Astrocyte of the cerebellum (primary cell): ENCODE measurements at regions of chr5 and their contacts with region 1.

Region 1: DNA sequence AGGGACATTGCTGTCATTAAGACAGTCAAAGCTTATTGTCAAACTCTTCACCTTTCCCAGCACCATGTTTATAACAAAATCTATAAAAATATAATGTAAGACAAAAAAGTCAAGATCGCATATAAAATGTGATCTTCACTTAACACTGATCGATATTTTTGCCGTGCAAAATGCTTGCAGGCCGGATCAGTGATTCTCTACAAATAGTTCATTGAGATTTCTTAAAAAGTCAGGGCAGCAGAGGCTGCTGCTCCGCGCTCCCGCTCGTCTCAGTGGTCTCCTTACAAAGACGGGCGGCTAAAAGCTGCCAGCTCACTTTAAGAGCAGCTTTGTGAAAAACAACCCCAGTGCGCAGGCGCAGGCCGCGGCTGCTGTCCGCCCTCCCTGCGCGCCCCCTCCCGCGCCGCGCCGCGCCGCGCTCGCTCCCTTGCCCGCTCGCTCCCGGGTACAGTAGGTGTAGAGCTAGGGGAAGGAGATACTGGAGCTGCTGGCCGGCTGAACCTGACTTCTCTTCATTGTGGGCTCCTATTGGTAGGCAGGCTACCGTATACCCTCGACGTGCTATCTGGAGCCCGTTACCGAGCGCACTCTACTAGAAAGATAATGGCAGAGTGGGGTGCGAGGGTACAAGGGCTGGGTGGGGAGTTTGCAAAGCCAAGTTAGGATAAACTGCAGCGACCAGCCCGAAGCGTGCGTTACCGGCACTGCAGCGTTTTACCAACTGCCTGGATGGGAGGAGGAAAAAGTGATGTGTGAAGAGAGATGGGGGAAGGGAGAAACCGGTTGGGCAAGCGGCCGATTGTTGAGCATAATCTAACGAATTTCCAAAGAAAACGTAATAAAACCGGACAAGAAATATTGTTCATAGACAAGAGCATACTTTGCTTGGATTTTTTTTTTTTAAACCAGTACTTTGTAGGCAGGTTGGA is at the start of gene ARRDC3:
- DNase-seq: peak; percentile 89
- H3K4me3 ChIP-seq: peak within 1 kb of the TSS; percentile 93
- CTCF ChIP-seq: no peak

Region 2: GRCh38 chr5:90866333-90866732 is 517.0 kb before region 1 on chr5:
- in situ Hi-C with region 1: loop called (anchors 25 kb)
- DNase-seq: peak; percentile 18
- H3K4me3 ChIP-seq: no peak overlapping the region
- CTCF ChIP-seq: no peak

Region 3: DNA sequence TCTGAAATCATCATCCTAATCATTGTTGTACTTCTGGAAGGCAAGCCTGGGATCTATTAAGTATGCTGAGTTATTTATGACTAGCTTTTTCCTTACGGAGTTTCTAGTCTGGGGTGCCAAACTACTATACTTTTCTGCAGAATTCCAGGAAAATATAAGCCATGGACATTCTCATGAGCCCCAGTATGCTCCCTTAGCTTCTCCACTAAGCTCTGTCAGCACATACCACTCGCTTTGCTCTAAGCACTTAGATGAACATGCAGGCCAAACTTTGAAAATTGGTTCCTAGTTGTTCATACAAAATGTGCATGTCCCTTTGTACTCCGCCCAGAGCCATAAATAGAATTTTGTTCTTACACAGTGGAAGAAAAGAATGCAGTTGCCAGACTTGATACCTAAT is 284.8 kb before region 1 on chr5:
- in situ Hi-C with region 1: loop called (anchors 5 kb)
- DNase-seq: no peak
- H3K4me3 ChIP-seq: no peak overlapping the region
- CTCF ChIP-seq: no peak

Region 4: GRCh38 chr5:91352831-91353695 is 30.2 kb before region 1 on chr5:
- in situ Hi-C with region 1: no loop called
- DNase-seq: no peak
- H3K4me3 ChIP-seq: no peak overlapping the region
- CTCF ChIP-seq: no peak